A549 (cell line): ENCODE measurements at regions of chr13 and their contacts with region 1.

Region 1: GRCh38 chr13:59906413-59907049 is 257.2 kb downstream of the DIAPH3 start:
- DNase-seq: peak in 1 of 2 experiments; percentile 9
- ATAC-seq: peak in 1 of 2 experiments; percentile 41; a peak in 1 of 6 replicates
- H3K4me3 ChIP-seq: no peak overlapping the region
- H3K27ac ChIP-seq: no peak overlapping the region
- H3K4me1 ChIP-seq: no peaks in the 10 kb centered on the region
- CTCF ChIP-seq: peak; percentile 59
- EP300 ChIP-seq: no peak
- POLR2A ChIP-seq: no peak
- RAD21 ChIP-seq: peak; percentile 58 to 62

Region 2: GRCh38 chr13:59304596-59304995 is 601.9 kb before region 1 on chr13:
- CTCF ChIA-PET with region 1: no interaction called
- POLR2A ChIA-PET with region 1: no interaction called
- DNase-seq: no peak
- ATAC-seq: no peak
- H3K4me3 ChIP-seq: no peak overlapping the region
- H3K27ac ChIP-seq: no peak overlapping the region
- H3K4me1 ChIP-seq: no peaks in the 10 kb centered on the region
- CTCF ChIP-seq: no peak
- EP300 ChIP-seq: no peak
- POLR2A ChIP-seq: no peak
- RAD21 ChIP-seq: no peak

Region 3: DNA sequence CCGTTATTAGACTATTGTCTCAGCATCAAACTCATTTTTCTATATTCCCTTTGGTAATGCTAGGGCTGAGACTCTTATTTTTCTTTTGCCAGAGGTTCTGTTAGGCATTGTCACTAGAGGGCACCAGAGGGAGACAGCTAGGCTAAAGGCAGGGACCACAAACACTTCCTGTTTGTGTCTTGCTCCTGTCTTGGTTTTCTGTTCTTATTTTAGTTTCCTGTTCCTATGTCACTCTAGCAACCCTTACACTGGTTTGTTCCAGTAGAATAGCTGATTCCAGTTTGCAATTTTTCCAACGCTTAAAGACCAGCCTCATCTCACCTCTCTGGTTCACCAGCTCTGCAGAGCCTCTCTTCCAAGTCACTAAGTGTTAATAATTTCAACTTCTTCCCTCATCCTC is 514.8 kb before region 1 on chr13:
- CTCF ChIA-PET with region 1: interaction called, 11 read pairs
- POLR2A ChIA-PET with region 1: no interaction called
- DNase-seq: peak; percentile 2 to 38
- ATAC-seq: peak in 1 of 2 experiments; percentile 77; a peak in 3 of 6 replicates
- H3K4me3 ChIP-seq: no peak overlapping the region
- H3K27ac ChIP-seq: no peak overlapping the region
- H3K4me1 ChIP-seq: no peaks in the 10 kb centered on the region
- CTCF ChIP-seq: peak; percentile 41; the same call in 2 of the 3 replicates
- EP300 ChIP-seq: no peak
- POLR2A ChIP-seq: no peak
- RAD21 ChIP-seq: peak; percentile 28 to 47; a peak in 3 of 5 replicates

Region 4: DNA sequence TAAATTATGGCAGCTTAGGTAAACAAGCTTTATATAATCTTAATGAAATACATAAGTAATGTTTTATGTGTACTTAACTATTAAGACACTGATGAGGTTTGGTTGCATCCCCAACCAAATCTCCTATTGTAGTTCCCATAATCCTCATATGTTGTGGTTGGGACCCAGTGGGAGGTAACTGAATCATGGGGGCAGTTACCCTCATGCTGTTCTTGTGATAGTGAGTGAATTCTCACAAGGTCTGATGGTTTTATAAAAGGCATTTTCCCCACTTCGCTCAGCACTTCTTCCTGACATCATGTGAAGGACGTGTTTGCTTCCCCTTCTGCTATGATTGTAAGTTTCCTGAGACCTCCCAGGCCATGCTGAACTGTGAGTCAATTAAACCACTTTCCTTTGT is 44.5 kb after region 1 on chr13:
- CTCF ChIA-PET with region 1: no interaction called
- POLR2A ChIA-PET with region 1: no interaction called
- DNase-seq: no peak
- ATAC-seq: no peak
- H3K4me3 ChIP-seq: no peak overlapping the region
- H3K27ac ChIP-seq: no peak overlapping the region
- H3K4me1 ChIP-seq: no peaks in the 10 kb centered on the region
- CTCF ChIP-seq: no peak
- EP300 ChIP-seq: no peak
- POLR2A ChIP-seq: no peak
- RAD21 ChIP-seq: no peak